Activated CD4-positive, alpha-beta T cell treated with anti-CD3 and anti-CD28 coated beads for 36 hours (primary cell): ENCODE measurements at regions of chr19 and their contacts with region 1.

Region 1: DNA sequence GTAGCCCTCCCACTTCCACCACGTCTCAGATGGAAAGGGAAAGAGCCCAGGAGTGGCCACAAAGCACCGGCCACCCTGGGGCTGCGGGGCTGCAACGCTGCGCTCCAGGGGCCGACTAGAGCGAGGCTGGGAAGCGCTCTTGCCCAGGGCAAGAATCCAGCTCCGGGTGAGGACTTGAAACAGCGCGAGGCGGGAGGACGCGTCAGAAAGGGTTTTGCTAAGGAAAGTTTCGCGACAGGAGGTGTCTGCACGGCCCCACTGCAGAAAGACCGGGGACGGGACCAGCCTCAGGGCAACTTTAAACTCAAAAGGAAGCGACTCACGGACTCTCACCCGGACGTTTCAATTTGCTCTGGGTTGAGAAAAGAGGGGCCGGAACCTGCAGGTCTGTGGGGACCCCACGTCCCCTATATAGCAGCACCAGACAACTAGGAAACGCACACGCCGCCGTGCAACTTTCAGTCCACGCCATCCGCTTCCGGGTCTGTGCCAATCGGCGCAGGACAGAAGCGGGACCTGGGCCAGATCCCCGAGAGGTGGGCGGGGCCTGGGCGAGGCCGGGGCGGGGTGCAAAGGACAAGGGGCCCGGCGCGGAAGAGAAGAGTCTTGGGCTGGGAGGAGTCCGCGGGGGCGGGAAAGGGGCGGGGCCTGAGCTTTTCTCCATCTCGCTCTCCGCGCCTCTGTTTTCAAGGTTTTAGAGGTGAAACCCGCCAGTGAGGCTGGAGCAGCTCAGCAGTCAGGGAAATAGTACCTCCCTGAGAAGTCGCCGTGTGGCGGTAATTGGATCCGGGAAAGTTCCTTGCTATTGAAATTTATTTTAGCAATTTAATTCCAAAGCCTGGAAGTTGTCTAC is at the start of gene ZNF816:
- DNase-seq: peak; percentile 100
- ATAC-seq: peak; percentile 100
- H3K4me3 Mint-ChIP-seq: peak within 1 kb of the TSS; percentile 96
- H3K27ac Mint-ChIP-seq: peak within 1 kb of the TSS; percentile 96
- H3K4me1 Mint-ChIP-seq: peaks cover 26% of the 10 kb centered on the region
- H3K27me3 Mint-ChIP-seq: no peaks in the 10 kb centered on the region
- total RNA-seq, gene ZNF816: 10.7 to 11.4 TPM

Region 2: GRCh38 chr19:52048555-52049501 is 913.8 kb before region 1 on chr19 and contains the start of gene ZNF432:
- CTCF ChIA-PET with region 1: no interaction called
- POLR2A ChIA-PET with region 1: no interaction called
- intact Hi-C with region 1: loop called in 1 of 2 experiments (anchors 5 kb)
- DNase-seq: peak; percentile 88
- ATAC-seq: peak; percentile 88
- H3K4me3 Mint-ChIP-seq: peak within 1 kb of the TSS; percentile 94
- H3K27ac Mint-ChIP-seq: peak within 1 kb of the TSS; percentile 100
- H3K4me1 Mint-ChIP-seq: peaks cover 16% of the 10 kb centered on the region
- H3K27me3 Mint-ChIP-seq: no peaks in the 10 kb centered on the region
- total RNA-seq, gene ZNF432: 11.5 to 12.8 TPM

Region 3: DNA sequence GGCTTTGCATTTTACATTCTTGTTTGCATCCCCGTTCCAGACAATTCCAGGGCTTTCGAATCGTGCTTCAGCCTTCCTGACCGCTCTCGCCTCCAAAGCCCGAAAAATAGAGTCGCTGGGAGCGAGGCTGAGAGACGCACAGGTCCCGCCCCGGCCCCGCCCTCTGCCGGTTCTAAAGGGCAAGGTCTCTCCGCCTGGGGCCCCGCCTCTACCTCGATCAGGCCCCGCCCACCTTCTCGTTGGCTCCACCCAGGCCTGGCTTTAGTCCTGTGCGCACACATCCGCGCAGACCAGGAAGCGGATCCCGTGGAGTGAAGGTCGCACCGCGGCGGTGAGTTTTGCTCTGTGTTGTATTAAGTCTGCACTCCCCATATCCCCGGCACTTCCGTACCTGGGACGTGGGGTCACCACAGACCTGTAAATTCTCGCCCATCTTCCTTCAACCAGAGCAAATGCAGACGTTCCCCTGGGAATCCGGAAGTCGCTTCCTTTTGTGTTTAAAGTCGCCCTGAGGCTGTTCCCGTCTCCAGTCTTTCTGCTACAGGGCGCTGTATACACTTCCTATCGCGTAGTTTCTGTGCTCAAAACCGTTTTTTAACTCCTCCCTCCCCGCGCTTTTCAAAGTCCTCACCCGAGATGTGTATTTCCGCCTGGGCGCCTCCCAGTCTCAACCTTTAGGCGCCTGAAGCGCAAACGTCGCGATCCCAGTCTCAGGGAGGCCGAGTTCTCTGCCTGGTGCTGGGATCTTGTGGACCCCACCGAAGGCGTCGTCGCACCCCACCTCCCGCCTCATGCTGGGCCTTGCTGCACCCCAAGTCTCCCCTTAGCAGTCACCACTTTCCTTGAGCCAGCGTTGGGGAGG is 392.4 kb before region 1 on chr19 and contains the start of gene ZNF701:
- CTCF ChIA-PET with region 1: no interaction called
- POLR2A ChIA-PET with region 1: no interaction called
- intact Hi-C with region 1: loop called in 1 of 2 experiments (anchors 1 kb)
- DNase-seq: peak; percentile 98
- ATAC-seq: peak; percentile 99
- H3K4me3 Mint-ChIP-seq: peak within 1 kb of the TSS; percentile 88
- H3K27ac Mint-ChIP-seq: peak within 1 kb of the TSS; percentile 96
- H3K4me1 Mint-ChIP-seq: peaks cover 27% of the 10 kb centered on the region
- H3K27me3 Mint-ChIP-seq: no peaks in the 10 kb centered on the region
- total RNA-seq, gene ZNF701: 19.0 to 21.5 TPM

Region 4: DNA sequence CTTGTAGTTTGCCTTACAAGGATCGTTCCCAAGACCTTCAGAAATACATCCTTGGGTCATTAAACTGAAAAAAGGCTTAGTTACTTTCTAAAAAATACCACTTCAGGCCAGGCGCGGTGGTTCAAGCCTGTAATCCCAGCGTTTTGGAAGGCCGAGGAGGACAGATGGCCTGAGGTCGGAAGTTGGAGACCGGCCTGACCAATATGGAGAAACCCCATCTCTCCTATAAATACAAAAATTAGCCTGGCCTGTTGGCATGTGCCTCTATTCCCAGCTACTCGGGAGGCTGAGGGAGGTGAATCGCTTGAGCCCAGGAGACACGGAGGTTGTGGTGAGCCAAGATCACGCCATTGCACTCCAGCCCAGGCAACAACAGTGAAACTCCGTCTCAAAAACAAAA is 138.9 kb before region 1 on chr19:
- CTCF ChIA-PET with region 1: no interaction called
- POLR2A ChIA-PET with region 1: no interaction called
- intact Hi-C with region 1: loop called in 1 of 2 experiments (anchors 1 kb)
- DNase-seq: no peak
- ATAC-seq: no peak
- H3K4me3 Mint-ChIP-seq: no peak overlapping the region
- H3K27ac Mint-ChIP-seq: no peak overlapping the region
- H3K4me1 Mint-ChIP-seq: peaks cover 9% of the 10 kb centered on the region
- H3K27me3 Mint-ChIP-seq: no peaks in the 10 kb centered on the region

Region 5: GRCh38 chr19:52922841-52923777 is 39.5 kb before region 1 on chr19 and contains the start of gene ZNF888:
- CTCF ChIA-PET with region 1: no interaction called
- POLR2A ChIA-PET with region 1: no interaction called
- intact Hi-C with region 1: loop called in 1 of 2 experiments (anchors 1 kb)
- DNase-seq: peak; percentile 96
- ATAC-seq: peak; percentile 100
- H3K4me3 Mint-ChIP-seq: peak within 1 kb of the TSS; percentile 89
- H3K27ac Mint-ChIP-seq: peak within 1 kb of the TSS; percentile 94
- H3K4me1 Mint-ChIP-seq: peaks cover 23% of the 10 kb centered on the region
- H3K27me3 Mint-ChIP-seq: no peaks in the 10 kb centered on the region
- total RNA-seq, gene ZNF888: 5.1 to 5.5 TPM

Region 6: GRCh38 chr19:53037101-53038097 is 74.8 kb after region 1 on chr19:
- CTCF ChIA-PET with region 1: no interaction called
- POLR2A ChIA-PET with region 1: no interaction called
- intact Hi-C with region 1: no loop called
- DNase-seq: peak; percentile 52
- ATAC-seq: no peak
- H3K4me3 Mint-ChIP-seq: peak overlapping the region; percentile 14
- H3K27ac Mint-ChIP-seq: no peak overlapping the region
- H3K4me1 Mint-ChIP-seq: peaks cover 4% of the 10 kb centered on the region
- H3K27me3 Mint-ChIP-seq: peaks cover 14% of the 10 kb centered on the region

Region 7: GRCh38 chr19:53158119-53158656 is 195.6 kb after region 1 on chr19:
- CTCF ChIA-PET with region 1: no interaction called
- POLR2A ChIA-PET with region 1: no interaction called
- intact Hi-C with region 1: loop called in 1 of 2 experiments (anchors 1 kb)
- DNase-seq: peak; percentile 64
- ATAC-seq: peak; percentile 36
- H3K4me3 Mint-ChIP-seq: peak overlapping the region; percentile 72
- H3K27ac Mint-ChIP-seq: peak overlapping the region; percentile 74
- H3K4me1 Mint-ChIP-seq: peaks cover 14% of the 10 kb centered on the region
- H3K27me3 Mint-ChIP-seq: no peaks in the 10 kb centered on the region